Panc1 (cell line): ENCODE measurements at regions of chr12 and their contacts with region 1.

Region 1: DNA sequence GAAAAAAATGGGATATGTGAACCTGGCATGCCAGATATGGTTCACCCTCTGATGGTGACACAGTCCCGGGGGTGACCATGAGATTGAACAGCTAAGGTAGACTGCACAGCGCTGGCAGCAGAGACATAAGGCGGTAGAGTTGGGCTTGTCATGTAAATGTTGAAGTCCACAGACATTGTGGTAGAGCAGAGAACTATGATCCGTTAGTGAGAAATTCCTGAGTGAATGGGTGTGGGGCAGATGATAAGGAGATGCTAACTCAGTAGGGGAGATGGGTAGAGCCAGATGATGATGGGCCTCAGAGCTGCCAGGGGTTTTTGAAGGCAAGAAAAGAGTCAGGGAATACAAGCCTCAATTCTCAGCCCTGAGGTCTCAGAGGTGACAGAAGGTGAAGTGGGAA is 51.1 kb upstream of the DNM1L start:
- DNase-seq: no peak
- ATAC-seq: no peak
- H3K4me3 ChIP-seq: no peak overlapping the region
- H3K27ac ChIP-seq: no peak overlapping the region
- H3K4me1 ChIP-seq: no peaks in the 10 kb centered on the region
- H3K27me3 ChIP-seq: no peaks in the 10 kb centered on the region
- CTCF ChIP-seq: no peak

Region 2: DNA sequence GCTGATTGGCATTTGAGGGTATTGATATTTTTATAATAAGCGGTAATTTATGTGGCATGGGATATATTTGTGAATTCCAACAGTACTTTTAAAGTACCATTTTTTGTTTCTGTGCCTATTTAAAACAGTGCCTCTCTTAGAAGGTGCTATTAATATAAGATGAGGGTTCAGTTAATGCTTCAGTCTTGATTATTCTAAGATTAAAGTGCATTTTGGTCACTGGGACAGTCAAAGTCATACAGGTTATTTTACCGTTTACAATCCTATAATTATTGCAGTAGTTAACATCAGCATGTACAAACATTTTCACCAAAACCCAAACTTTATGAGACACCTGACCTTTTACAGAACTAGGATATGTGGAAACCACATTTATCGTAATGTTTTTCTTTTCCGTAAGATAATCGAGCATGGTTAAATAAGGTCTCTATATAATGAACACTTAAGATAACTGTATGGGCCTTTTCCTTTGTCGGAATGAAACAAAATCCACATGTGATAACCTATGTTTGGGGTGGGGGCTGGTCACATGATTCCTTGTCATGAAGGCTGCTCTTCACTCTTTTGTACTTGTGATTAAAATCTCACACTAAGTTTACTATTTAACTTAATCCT is 13.4 kb after region 1 on chr12:
- CTCF ChIA-PET with region 1: no interaction called
- POLR2A ChIA-PET with region 1: interaction called, 11 read pairs
- in situ Hi-C with region 1: no loop called
- intact Hi-C with region 1: no loop called
- DNase-seq: no peak
- ATAC-seq: no peak
- H3K4me3 ChIP-seq: no peak overlapping the region
- H3K27ac ChIP-seq: no peak overlapping the region
- H3K4me1 ChIP-seq: no peaks in the 10 kb centered on the region
- H3K27me3 ChIP-seq: no peaks in the 10 kb centered on the region
- CTCF ChIP-seq: no peak

Region 3: DNA sequence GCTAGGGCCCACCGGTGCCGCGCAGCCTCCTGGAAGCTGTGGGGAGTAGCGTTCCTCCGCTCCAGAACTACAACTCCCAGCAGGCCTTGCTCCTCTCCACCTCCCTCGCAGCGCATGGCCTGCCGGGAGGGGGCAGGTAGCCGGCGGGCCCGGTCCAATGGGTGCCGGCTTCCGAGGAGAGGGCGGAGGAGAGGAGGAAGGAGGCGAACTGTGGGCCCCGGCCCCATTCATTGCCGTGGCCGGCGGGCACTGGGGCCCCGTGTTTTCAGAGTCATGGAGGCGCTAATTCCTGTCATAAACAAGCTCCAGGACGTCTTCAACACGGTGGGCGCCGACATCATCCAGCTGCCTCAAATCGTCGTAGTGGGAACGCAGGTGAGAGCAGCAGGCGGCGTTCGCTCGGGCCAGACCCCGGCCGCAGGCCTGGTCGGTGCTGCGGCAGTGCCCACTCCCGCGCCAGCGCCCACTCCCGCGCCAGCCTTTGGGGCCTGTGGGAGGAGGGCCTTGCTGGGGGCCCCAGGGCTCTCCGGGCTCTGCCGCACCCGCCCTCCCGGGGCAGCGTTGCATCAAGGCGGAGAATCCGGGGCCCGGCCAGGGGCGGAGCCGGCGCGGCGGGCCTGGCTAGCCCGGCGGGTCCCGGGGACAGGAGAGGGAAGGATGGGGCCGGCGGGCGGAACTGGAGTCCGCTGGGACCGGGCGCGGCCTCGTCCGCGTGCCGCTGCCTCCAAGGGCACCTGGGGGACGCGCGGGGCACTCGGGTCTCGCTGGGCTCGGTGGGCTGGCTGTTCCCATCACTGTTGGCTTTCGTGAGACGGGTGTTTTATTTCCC is 51.3 kb after region 1 on chr12 and contains the start of gene DNM1L:
- CTCF ChIA-PET with region 1: no interaction called
- POLR2A ChIA-PET with region 1: no interaction called
- in situ Hi-C with region 1: no loop called
- intact Hi-C with region 1: no loop called
- DNase-seq: peak; percentile 93
- ATAC-seq: peak; percentile 99
- H3K4me3 ChIP-seq: peak within 1 kb of the TSS; percentile 67 to 96
- H3K27ac ChIP-seq: peak within 1 kb of the TSS; percentile 87
- H3K4me1 ChIP-seq: peaks cover 16% of the 10 kb centered on the region
- H3K27me3 ChIP-seq: no peaks in the 10 kb centered on the region
- CTCF ChIP-seq: no peak
- total RNA-seq, gene DNM1L: 91.8 TPM

Region 4: GRCh38 chr12:32718926-32719325 is 91.0 kb after region 1 on chr12:
- CTCF ChIA-PET with region 1: no interaction called
- POLR2A ChIA-PET with region 1: no interaction called
- in situ Hi-C with region 1: no loop called
- intact Hi-C with region 1: no loop called
- DNase-seq: no peak
- ATAC-seq: no peak
- H3K4me3 ChIP-seq: no peak overlapping the region
- H3K27ac ChIP-seq: no peak overlapping the region
- H3K4me1 ChIP-seq: no peaks in the 10 kb centered on the region
- H3K27me3 ChIP-seq: no peaks in the 10 kb centered on the region
- CTCF ChIP-seq: no peak